MCF 10A (cell line): ENCODE measurements at regions of chrX and their contacts with region 1.

Region 1: DNA sequence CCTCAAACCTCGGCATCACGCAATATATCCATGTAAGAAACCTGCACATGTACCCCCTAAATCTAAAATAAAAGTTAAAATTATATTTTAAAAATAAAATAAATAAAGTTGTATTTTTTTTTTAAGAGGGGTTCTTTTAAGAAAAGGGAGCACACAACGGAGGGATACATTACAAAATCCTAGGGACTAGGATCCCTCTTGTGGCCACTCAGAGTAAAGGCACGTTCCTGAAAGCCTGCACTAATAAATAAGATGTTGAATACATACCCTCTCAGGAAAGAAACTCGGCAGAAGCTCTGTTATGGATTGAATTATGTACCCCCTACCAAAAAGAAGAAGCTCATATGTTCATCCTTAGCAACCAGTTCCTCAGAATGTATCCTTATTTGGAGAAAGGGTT is 50.9 kb upstream of the PRDX4 start:
- DNase-seq: peak; percentile 27
- H3K4me3 Mint-ChIP-seq: no peak overlapping the region
- H3K27ac Mint-ChIP-seq: no peak overlapping the region
- H3K4me1 Mint-ChIP-seq: no peaks in the 10 kb centered on the region
- H3K27me3 Mint-ChIP-seq: peaks cover 41% of the 10 kb centered on the region
- CTCF ChIP-seq: peak; percentile 50

Region 2: GRCh38 chrX:23008431-23009099 is 607.8 kb before region 1 on chrX:
- CTCF ChIA-PET with region 1: interaction called, 3 read pairs
- POLR2A ChIA-PET with region 1: no interaction called
- intact Hi-C with region 1: loop called (anchors 1 kb)
- DNase-seq: peak; percentile 54
- H3K4me3 Mint-ChIP-seq: no peak overlapping the region
- H3K27ac Mint-ChIP-seq: no peak overlapping the region
- H3K4me1 Mint-ChIP-seq: peaks cover 8% of the 10 kb centered on the region
- H3K27me3 Mint-ChIP-seq: peaks cover 28% of the 10 kb centered on the region
- CTCF ChIP-seq: peak; percentile 37

Region 3: GRCh38 chrX:23626651-23627050 is 10.3 kb after region 1 on chrX:
- CTCF ChIA-PET with region 1: interaction called, 11 read pairs
- POLR2A ChIA-PET with region 1: no interaction called
- intact Hi-C with region 1: no loop called
- DNase-seq: no peak
- H3K4me3 Mint-ChIP-seq: no peak overlapping the region
- H3K27ac Mint-ChIP-seq: no peak overlapping the region
- H3K4me1 Mint-ChIP-seq: no peaks in the 10 kb centered on the region
- H3K27me3 Mint-ChIP-seq: peaks cover 58% of the 10 kb centered on the region
- CTCF ChIP-seq: no peak

Region 4: GRCh38 chrX:23633834-23634580 is 17.6 kb after region 1 on chrX:
- CTCF ChIA-PET with region 1: interaction called, 10 read pairs
- POLR2A ChIA-PET with region 1: no interaction called
- intact Hi-C with region 1: no loop called
- DNase-seq: peak; percentile 15
- H3K4me3 Mint-ChIP-seq: no peak overlapping the region
- H3K27ac Mint-ChIP-seq: no peak overlapping the region
- H3K4me1 Mint-ChIP-seq: no peaks in the 10 kb centered on the region
- H3K27me3 Mint-ChIP-seq: peaks cover 55% of the 10 kb centered on the region
- CTCF ChIP-seq: peak; percentile 35